Dendritic cell treated with granulocyte-macrophage colony-stimulating factor and Interleukin-4, amounts not matched to agents 40 ng/mL and 50 ng/mL, for 4 days (primary cell): ENCODE measurements at regions of chr1 and their contacts with region 1.

Region 1: DNA sequence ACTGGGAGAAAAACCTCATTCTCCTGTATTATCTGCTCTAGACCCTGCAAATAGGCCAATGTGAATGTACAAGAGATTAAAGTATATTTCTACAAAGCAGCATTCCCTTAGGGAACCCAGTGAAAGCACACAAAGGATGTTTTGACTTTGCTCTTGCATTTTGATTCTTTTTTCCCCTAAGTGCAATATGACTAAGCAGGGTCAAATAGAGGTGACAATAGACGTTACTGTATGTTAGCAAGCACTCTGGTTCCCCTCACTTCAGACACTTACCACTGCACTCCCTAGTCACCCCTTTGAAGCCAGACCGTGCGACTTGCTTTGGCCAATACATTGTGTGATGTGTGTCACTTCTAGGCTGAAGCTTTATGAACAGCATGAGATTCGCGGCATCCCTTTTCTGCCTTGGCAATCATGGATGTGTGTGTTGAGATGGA is 209.7 kb downstream of the RHOU start:
- H3K4me3 Mint-ChIP-seq: no peak overlapping the region
- H3K27ac Mint-ChIP-seq: no peak overlapping the region
- H3K4me1 Mint-ChIP-seq: peaks cover 57% of the 10 kb centered on the region
- H3K27me3 Mint-ChIP-seq: no peaks in the 10 kb centered on the region

Region 2: GRCh38 chr1:228734881-228735801 is 209.8 kb before region 1 on chr1 and contains the start of gene RHOU:
- intact Hi-C with region 1: loop called (anchors 10 kb)
- H3K4me3 Mint-ChIP-seq: peak within 1 kb of the TSS; percentile 92
- H3K27ac Mint-ChIP-seq: peak within 1 kb of the TSS; percentile 84
- H3K4me1 Mint-ChIP-seq: peaks cover 43% of the 10 kb centered on the region
- H3K27me3 Mint-ChIP-seq: peaks cover 4% of the 10 kb centered on the region

Region 3: DNA sequence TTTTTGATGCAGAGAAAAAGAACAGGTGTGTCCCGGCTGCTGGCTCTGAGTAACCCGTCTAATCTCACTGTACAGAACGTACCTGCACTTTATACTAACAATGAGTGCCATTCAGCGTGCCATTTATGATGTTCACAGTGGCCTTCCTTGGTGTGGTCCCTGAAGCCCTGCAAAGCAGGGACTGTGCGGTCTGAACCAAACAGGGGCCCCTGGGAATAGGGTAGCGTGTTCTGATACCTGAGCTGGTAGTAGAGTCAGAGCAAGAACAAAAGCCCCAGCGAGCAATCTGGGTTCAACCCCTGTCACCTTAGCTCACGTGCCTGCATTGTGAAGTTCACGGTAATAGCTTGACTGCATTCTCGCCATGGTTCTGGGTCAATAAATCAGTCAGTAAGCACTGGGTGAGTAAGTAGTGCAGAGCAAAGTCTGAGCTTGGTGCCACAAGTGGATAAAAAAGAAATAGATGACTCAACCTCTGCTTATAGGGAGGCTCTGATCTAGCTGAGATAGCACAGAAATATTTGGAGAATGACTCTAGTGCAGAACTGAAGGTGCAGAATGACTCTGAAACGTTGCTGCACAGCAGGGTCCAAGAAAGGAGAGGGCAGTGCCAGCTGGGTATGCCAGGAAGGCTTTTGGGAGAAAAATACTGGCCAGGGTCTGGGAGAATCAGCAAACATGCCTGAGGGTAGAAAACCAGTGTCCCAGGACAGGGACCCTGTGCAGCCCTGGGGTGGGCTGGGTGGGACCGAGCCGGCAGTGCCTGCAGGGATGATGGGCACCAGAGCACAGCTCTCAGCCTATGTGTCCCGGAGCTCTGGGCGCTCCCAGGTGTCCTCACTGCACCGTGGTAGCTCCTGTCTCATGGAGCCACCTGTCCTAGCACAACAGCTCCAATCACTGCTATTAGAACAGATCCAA is 83.8 kb before region 1 on chr1:
- intact Hi-C with region 1: no loop called
- H3K4me3 Mint-ChIP-seq: no peak overlapping the region
- H3K27ac Mint-ChIP-seq: no peak overlapping the region
- H3K4me1 Mint-ChIP-seq: peaks cover 40% of the 10 kb centered on the region
- H3K27me3 Mint-ChIP-seq: peaks cover 7% of the 10 kb centered on the region

Region 4: GRCh38 chr1:228902781-228903433 is 42.0 kb before region 1 on chr1:
- intact Hi-C with region 1: loop called (anchors 10 kb)
- H3K4me3 Mint-ChIP-seq: no peak overlapping the region
- H3K27ac Mint-ChIP-seq: no peak overlapping the region
- H3K4me1 Mint-ChIP-seq: peaks cover 11% of the 10 kb centered on the region
- H3K27me3 Mint-ChIP-seq: peaks cover 8% of the 10 kb centered on the region

Region 5: GRCh38 chr1:228989992-228990827 is 45.3 kb after region 1 on chr1:
- intact Hi-C with region 1: loop called (anchors 10 kb)
- H3K4me3 Mint-ChIP-seq: no peak overlapping the region
- H3K27ac Mint-ChIP-seq: peak overlapping the region; percentile 90
- H3K4me1 Mint-ChIP-seq: peaks cover 93% of the 10 kb centered on the region
- H3K27me3 Mint-ChIP-seq: no peaks in the 10 kb centered on the region

Region 6: GRCh38 chr1:229059671-229060539 is 115.0 kb after region 1 on chr1:
- intact Hi-C with region 1: loop called (anchors 10 kb)
- H3K4me3 Mint-ChIP-seq: no peak overlapping the region
- H3K27ac Mint-ChIP-seq: no peak overlapping the region
- H3K4me1 Mint-ChIP-seq: peaks cover 47% of the 10 kb centered on the region
- H3K27me3 Mint-ChIP-seq: peaks cover 15% of the 10 kb centered on the region